CD4-positive, alpha-beta memory T cell (primary cell): ENCODE measurements at regions of chr9 and their contacts with region 1.

Region 1: GRCh38 chr9:69035438-69036308 is at the start of gene FXN:
- DNase-seq: peak; percentile 71 to 82 (median 78)
- H3K4me3 ChIP-seq: peak within 1 kb of the TSS; percentile 78 to 86
- H3K4me3 Mint-ChIP-seq: peak within 1 kb of the TSS; percentile 95 to 99 (median 98)
- H3K27ac ChIP-seq: peak within 1 kb of the TSS; percentile 60
- H3K27ac Mint-ChIP-seq: peak within 1 kb of the TSS; percentile 87 to 96 (median 94)
- H3K4me1 ChIP-seq: peaks cover 23% of the 10 kb centered on the region
- H3K4me1 Mint-ChIP-seq: peaks cover 18 to 36% (median 23%) of the 10 kb centered on the region in 4 donors
- H3K27me3 ChIP-seq: no peaks in the 10 kb centered on the region
- H3K27me3 Mint-ChIP-seq: no peaks in the 10 kb centered on the region
- total RNA-seq, gene FXN: 14.6 to 15.9 TPM

Region 2: DNA sequence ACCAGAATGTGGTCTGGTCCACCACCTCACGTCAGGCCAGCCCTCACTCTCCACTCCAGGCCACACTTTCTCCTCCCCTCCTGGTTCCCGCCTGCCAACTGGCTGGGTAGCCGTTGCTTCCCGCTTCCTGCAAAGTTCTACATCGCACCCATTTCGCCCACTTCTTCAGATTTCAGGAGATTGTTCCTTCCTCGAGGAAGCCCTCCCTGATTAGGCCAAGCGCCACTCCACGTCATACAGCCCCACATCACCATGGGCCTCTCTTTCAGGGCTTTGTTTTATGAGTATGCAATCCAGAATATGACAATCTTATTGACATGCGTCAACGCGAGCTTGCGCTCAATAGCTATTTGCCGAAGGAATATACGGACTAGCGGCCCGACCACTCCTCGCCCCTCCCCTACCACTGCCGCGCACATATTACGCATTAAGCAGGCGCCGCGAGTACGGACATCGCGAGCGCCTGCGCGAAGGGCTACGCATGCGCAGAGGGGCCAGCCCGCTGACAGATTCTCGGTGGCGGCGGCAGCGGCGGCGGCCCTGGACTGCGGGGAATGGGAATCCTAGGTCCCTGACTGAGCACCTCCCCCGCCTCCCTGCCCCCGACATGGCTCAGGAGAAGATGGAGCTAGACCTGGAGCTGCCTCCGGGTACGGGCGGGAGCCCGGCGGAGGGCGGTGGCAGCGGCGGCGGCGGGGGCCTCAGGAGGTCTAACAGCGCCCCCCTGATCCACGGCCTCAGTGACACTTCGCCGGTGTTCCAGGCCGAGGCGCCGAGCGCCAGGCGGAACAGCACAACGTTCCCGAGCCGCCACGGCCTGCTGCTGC is 255.9 kb before region 1 on chr9:
- CTCF ChIA-PET with region 1: interaction called, 5 read pairs
- POLR2A ChIA-PET with region 1: interaction called, 6 read pairs
- intact Hi-C with region 1: loop called (anchors 1 kb)
- DNase-seq: peak; percentile 94 to 96 (median 94)
- H3K4me3 ChIP-seq: peak overlapping the region; percentile 92 to 100
- H3K4me3 Mint-ChIP-seq: no peak overlapping the region
- H3K27ac ChIP-seq: peak overlapping the region; percentile 85
- H3K27ac Mint-ChIP-seq: no peak overlapping the region
- H3K4me1 ChIP-seq: peaks cover 53% of the 10 kb centered on the region
- H3K4me1 Mint-ChIP-seq: peaks cover 3 to 7% (median 4%) of the 10 kb centered on the region in 4 donors
- H3K27me3 ChIP-seq: no peaks in the 10 kb centered on the region
- H3K27me3 Mint-ChIP-seq: peaks cover 4 to 5% of the 10 kb centered on the region in 2 donors

Region 3: GRCh38 chr9:69121828-69122548 is 86.3 kb after region 1 on chr9:
- CTCF ChIA-PET with region 1: no interaction called
- POLR2A ChIA-PET with region 1: no interaction called
- intact Hi-C with region 1: loop called (anchors 5 kb)
- DNase-seq: peak; percentile 44 to 59 (median 54)
- H3K4me3 ChIP-seq: peak overlapping the region; percentile 34 to 75
- H3K4me3 Mint-ChIP-seq: peak overlapping the region; percentile 93 to 97 (median 96)
- H3K27ac ChIP-seq: no peak overlapping the region
- H3K27ac Mint-ChIP-seq: peak overlapping the region; percentile 31 to 92 (median 87)
- H3K4me1 ChIP-seq: peaks cover 13% of the 10 kb centered on the region
- H3K4me1 Mint-ChIP-seq: peaks cover 6 to 19% (median 11%) of the 10 kb centered on the region in 4 donors
- H3K27me3 ChIP-seq: no peaks in the 10 kb centered on the region
- H3K27me3 Mint-ChIP-seq: no peaks in the 10 kb centered on the region

Region 4: GRCh38 chr9:69180670-69181069 is 145.0 kb after region 1 on chr9:
- CTCF ChIA-PET with region 1: interaction called, 10 read pairs
- POLR2A ChIA-PET with region 1: interaction called, 15 read pairs
- intact Hi-C with region 1: no loop called
- DNase-seq: peak; percentile 26 to 68 (median 36)
- H3K4me3 ChIP-seq: no peak overlapping the region
- H3K4me3 Mint-ChIP-seq: peak overlapping the region in 3 of 8 donors; percentile 17 to 43 (median 20)
- H3K27ac ChIP-seq: no peak overlapping the region
- H3K27ac Mint-ChIP-seq: peak overlapping the region; percentile 5 to 74 (median 61)
- H3K4me1 ChIP-seq: peaks cover 29% of the 10 kb centered on the region
- H3K4me1 Mint-ChIP-seq: peaks cover 16 to 54% (median 34%) of the 10 kb centered on the region in 4 donors
- H3K27me3 ChIP-seq: no peaks in the 10 kb centered on the region
- H3K27me3 Mint-ChIP-seq: no peaks in the 10 kb centered on the region

Region 5: GRCh38 chr9:69199769-69200470 is 164.2 kb after region 1 on chr9:
- CTCF ChIA-PET with region 1: interaction called, 17 read pairs
- POLR2A ChIA-PET with region 1: interaction called, 6 read pairs
- intact Hi-C with region 1: no loop called
- DNase-seq: no peak
- H3K4me3 ChIP-seq: no peak overlapping the region
- H3K4me3 Mint-ChIP-seq: peak overlapping the region in 6 of 8 donors; percentile 5 to 65 (median 37)
- H3K27ac ChIP-seq: no peak overlapping the region
- H3K27ac Mint-ChIP-seq: no peak overlapping the region
- H3K4me1 ChIP-seq: peaks cover 10% of the 10 kb centered on the region
- H3K4me1 Mint-ChIP-seq: peaks cover 12 to 23% (median 18%) of the 10 kb centered on the region in 4 donors
- H3K27me3 ChIP-seq: no peaks in the 10 kb centered on the region
- H3K27me3 Mint-ChIP-seq: no peaks in the 10 kb centered on the region

Region 6: DNA sequence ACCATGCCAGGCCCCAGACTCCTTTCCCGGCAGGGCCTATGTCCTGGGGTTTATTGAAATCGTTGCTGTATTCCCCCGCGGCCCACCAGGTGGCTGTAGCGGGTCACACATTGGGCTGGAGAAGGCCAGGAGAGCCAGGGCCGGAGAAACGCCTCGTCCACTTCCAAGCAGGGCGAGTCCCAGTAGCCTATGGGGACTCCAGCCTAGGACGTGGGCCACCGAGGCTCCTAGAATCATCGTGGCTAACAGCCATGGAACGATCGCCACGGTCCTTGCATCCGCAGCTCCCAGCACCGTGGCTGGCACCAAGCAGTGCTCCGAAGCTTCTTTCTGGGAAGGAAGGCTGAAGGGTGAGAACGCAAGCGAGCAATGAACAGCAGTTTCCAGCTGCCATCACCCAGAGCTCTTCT is 377.1 kb after region 1 on chr9:
- CTCF ChIA-PET with region 1: no interaction called
- POLR2A ChIA-PET with region 1: no interaction called
- intact Hi-C with region 1: no loop called
- DNase-seq: no peak
- H3K4me3 ChIP-seq: no peak overlapping the region
- H3K4me3 Mint-ChIP-seq: no peak overlapping the region
- H3K27ac ChIP-seq: no peak overlapping the region
- H3K27ac Mint-ChIP-seq: no peak overlapping the region
- H3K4me1 ChIP-seq: no peaks in the 10 kb centered on the region
- H3K4me1 Mint-ChIP-seq: no peaks in the 10 kb centered on the region
- H3K27me3 ChIP-seq: no peaks in the 10 kb centered on the region
- H3K27me3 Mint-ChIP-seq: peaks cover 1 to 3% of the 10 kb centered on the region in 2 donors

Region 7: DNA sequence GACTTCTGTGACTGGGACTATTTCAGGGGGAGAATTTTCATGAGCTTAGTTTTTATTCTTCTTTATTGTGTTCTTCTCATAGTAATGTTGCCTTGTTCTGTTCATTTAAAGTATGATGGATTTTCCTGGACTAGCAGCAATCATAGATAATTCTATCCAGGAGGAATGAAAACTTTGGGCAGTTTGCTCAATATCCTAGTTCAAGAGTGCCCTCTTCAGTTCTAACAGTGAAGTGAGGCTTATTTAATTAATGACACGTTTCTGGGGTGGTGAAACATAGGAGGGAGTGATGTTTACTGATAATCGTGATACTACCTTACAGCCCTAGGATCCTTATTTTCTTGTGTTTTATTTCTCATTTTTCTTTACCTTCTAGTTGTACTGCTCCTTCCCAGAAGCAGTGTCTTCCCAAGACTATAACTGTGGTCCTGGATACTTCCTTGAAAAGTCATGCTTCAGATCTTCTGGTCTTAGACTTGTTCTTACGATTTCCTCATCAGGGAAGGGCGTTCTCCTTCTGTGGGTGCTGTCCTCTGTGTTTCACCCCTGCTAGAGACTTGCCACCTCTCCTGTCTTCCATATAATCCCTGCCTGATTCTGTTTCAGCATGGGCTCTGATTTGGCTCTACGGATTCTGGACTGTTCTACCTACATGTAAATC is 842.3 kb after region 1 on chr9:
- CTCF ChIA-PET with region 1: no interaction called
- POLR2A ChIA-PET with region 1: no interaction called
- intact Hi-C with region 1: loop called (anchors 5 kb)
- DNase-seq: peak in 3 of 5 donors; percentile 0 to 16 (median 4)
- H3K4me3 ChIP-seq: no peak overlapping the region
- H3K4me3 Mint-ChIP-seq: no peak overlapping the region
- H3K27ac ChIP-seq: no peak overlapping the region
- H3K27ac Mint-ChIP-seq: peak overlapping the region in 1 of 7 donors; percentile 1
- H3K4me1 ChIP-seq: no peaks in the 10 kb centered on the region
- H3K4me1 Mint-ChIP-seq: no peaks in the 10 kb centered on the region
- H3K27me3 ChIP-seq: no peaks in the 10 kb centered on the region
- H3K27me3 Mint-ChIP-seq: peaks cover 2% of the 10 kb centered on the region in 2 donors